ENCODE measurements at regions of chr16 and their contacts with region 1.

Region 1: DNA sequence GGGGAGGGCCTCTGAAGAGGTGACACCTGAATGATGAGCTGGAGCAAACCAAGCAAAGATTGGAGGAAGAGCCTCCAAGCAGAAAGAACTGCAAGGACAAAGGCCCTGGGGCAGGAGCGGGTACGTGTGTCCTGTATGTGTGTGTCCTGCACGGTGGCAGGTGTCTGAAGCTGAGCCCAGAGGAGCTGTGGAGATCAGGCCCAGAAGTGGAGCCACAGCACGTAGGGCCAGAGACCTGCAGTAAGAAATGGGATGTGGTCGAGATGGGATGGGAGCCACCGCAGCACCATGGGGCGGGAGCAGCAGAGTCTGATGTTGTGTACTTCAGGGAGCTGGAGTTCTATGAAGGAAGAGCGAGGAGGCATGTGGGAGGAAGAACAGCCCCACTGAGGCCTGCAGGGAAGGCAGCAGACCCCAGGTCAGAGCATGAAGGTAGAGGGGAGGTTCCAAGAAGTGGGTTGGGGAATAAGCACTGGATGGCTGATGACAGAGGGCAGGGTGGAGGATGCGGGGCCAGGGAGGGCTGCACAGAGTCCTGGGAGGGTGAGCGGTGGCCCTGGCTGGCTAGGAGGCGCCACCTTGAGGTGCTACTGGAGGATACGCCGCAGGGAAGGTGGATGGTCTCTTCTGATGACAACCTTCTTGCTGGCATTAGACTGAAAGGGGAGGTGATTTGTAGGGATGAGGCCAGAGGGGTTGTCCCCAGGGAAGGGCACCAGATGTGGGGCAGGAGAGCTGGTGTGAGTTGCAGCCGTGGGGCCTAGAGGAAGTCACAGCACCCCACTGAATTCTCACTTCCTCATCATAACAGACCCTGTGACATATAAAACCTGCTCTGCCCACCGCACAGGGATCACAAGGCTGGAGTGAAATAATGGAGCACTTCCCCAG is 10.6 kb upstream of the CETP start:
- DNase-seq: peak; percentile 66
- H3K4me3 Mint-ChIP-seq: no peak overlapping the region
- H3K27ac Mint-ChIP-seq: no peak overlapping the region
- H3K4me1 Mint-ChIP-seq: peaks cover 20% of the 10 kb centered on the region
- H3K27me3 Mint-ChIP-seq: no peaks in the 10 kb centered on the region

Region 2: GRCh38 chr16:56793492-56793891 is 157.6 kb before region 1 on chr16:
- CTCF ChIA-PET with region 1: interaction called, 12 read pairs
- POLR2A ChIA-PET with region 1: no interaction called
- DNase-seq: peak; percentile 27
- H3K4me3 Mint-ChIP-seq: no peak overlapping the region
- H3K27ac Mint-ChIP-seq: no peak overlapping the region
- H3K4me1 Mint-ChIP-seq: no peaks in the 10 kb centered on the region
- H3K27me3 Mint-ChIP-seq: no peaks in the 10 kb centered on the region

Region 3: DNA sequence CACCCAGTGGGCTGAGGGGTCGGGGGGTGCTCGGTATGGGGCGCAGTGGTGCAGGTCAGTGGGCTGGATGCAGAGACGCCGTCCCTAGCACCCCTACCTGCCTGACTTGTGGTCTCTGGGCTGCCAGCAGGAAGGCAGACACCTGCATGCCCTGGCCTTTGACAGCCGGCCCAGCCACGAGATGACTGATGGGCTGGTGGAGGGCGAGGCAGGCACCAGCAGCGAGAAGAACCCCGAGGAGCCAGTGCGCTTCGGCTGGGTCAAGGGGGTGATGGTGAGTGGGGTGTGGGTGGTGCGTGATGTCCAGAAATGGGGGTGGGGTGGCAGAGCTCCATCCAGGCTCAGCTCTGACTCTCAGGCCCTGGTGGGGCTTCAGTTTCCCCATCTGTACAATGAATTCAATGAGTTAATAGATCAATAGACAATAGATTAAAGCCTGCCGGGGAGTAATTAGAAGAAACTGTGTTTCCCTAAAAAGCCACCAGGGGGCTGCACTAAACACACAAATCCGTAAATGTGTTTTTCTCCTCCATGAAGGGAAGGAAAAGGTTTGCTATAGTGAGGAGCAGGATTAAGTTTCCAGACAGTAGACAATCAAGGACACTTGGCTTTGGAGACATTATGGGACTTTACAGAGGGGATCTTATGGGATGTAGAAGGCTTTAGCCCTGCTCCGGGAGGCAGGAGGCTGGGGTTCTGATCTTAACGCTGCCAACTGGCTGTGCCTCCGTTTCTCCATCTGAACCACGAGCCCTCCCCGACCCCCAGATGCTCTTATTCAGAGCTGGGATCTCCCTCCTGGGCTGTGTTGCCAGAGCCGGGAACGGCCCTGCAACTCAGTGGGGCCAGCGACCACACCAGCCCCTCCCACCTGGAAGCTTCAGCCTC is 83.9 kb before region 1 on chr16:
- CTCF ChIA-PET with region 1: interaction called, 22 read pairs
- POLR2A ChIA-PET with region 1: no interaction called
- DNase-seq: peak; percentile 45
- H3K4me3 Mint-ChIP-seq: no peak overlapping the region
- H3K27ac Mint-ChIP-seq: no peak overlapping the region
- H3K4me1 Mint-ChIP-seq: peaks cover 16% of the 10 kb centered on the region
- H3K27me3 Mint-ChIP-seq: no peaks in the 10 kb centered on the region

Region 4: GRCh38 chr16:56938422-56939156 is 12.5 kb before region 1 on chr16:
- CTCF ChIA-PET with region 1: interaction called, 5 read pairs
- POLR2A ChIA-PET with region 1: interaction called, 140 read pairs
- DNase-seq: peak; percentile 77
- H3K4me3 Mint-ChIP-seq: peak overlapping the region; percentile 68
- H3K27ac Mint-ChIP-seq: peak overlapping the region; percentile 93
- H3K4me1 Mint-ChIP-seq: peaks cover 84% of the 10 kb centered on the region
- H3K27me3 Mint-ChIP-seq: no peaks in the 10 kb centered on the region

Region 5: GRCh38 chr16:56964243-56965148 is 13.4 kb after region 1 on chr16:
- CTCF ChIA-PET with region 1: interaction called, 40 read pairs
- POLR2A ChIA-PET with region 1: no interaction called
- DNase-seq: peak; percentile 96
- H3K4me3 Mint-ChIP-seq: no peak overlapping the region
- H3K27ac Mint-ChIP-seq: no peak overlapping the region
- H3K4me1 Mint-ChIP-seq: peaks cover 19% of the 10 kb centered on the region
- H3K27me3 Mint-ChIP-seq: no peaks in the 10 kb centered on the region

Measured in activated CD4-positive, alpha-beta memory T cell treated with anti-CD3 and anti-CD28 coated beads, Interleukin-2, amount 10 ng/mL, durations not matched to agents 7 days and 5 days (primary cell).